Stomach (tissue), 19 donors: ENCODE measurements at regions of chr22 and their contacts with region 1.

Region 1: DNA sequence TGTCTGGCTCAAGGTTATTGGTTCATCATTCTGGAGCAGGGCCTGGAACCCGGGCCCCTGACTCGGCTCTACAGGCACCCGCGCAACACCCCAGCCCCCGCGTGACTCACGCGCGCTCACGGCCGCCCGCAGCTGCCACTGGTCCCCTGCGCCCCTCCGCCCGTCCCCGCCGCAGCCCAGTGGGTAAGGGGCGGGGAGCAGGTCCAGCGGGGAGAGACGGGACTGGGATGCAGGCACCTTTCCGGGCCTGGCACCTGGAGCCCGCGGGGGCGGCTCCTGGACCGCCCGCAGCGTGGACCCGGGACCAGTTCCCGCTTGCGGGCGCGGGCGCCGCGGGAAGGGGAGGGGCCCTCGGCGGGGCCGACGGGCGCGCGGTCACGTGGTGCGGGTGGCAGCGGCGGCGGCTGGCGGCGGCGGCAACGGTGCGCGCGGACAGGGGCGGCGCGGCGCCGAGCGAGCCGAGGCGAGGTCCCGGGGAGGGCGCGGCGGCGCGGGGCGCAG is 7.2 kb downstream of the SEPTIN3 start:
- DNase-seq: peak; percentile 61 to 77
- H3K4me3 ChIP-seq: peak overlapping the region; percentile 47 to 64 (median 56)
- H3K27ac ChIP-seq: no peak overlapping the region
- H3K4me1 ChIP-seq: peaks cover 6 to 16% (median 14%) of the 10 kb centered on the region in 4 donors
- H3K27me3 ChIP-seq: peaks cover 0 to 74% (median 35%) of the 10 kb centered on the region in 3 donors
- CTCF ChIP-seq: no peak
- EP300 ChIP-seq: no peak
- POLR2A ChIP-seq: no peak

Region 2: GRCh38 chr22:42114721-42115120 is 138.3 kb after region 1 on chr22:
- intact Hi-C with region 1: loop called (anchors 10 kb)
- DNase-seq: no peak
- H3K4me3 ChIP-seq: no peak overlapping the region
- H3K27ac ChIP-seq: no peak overlapping the region
- H3K4me1 ChIP-seq: no peaks in the 10 kb centered on the region
- H3K27me3 ChIP-seq: no peaks in the 10 kb centered on the region
- CTCF ChIP-seq: peak in 1 of 7 experiments; percentile 20
- EP300 ChIP-seq: no peak
- POLR2A ChIP-seq: no peak